AG04449 (cell line): ENCODE measurements at regions of chr9 and their contacts with region 1.

Region 1: GRCh38 chr9:33623658-33624586 is 99.9 kb downstream of the ANKRD18B start:
- DNase-seq: no peak
- H3K4me3 ChIP-seq: no peak overlapping the region
- CTCF ChIP-seq: peak; percentile 79

Region 2: GRCh38 chr9:33638391-33638915 is 14.5 kb after region 1 on chr9:
- CTCF ChIA-PET with region 1: interaction called, 26 read pairs
- POLR2A ChIA-PET with region 1: no interaction called
- DNase-seq: no peak
- H3K4me3 ChIP-seq: no peak overlapping the region
- CTCF ChIP-seq: no peak

Region 3: GRCh38 chr9:33731142-33731541 is 107.2 kb after region 1 on chr9:
- CTCF ChIA-PET with region 1: interaction called, 591 read pairs
- POLR2A ChIA-PET with region 1: no interaction called
- DNase-seq: no peak
- H3K4me3 ChIP-seq: no peak overlapping the region
- CTCF ChIP-seq: no peak

Region 4: GRCh38 chr9:33737811-33738606 is 114.1 kb after region 1 on chr9:
- CTCF ChIA-PET with region 1: interaction called, 35 read pairs
- POLR2A ChIA-PET with region 1: no interaction called
- DNase-seq: peak; percentile 14
- H3K4me3 ChIP-seq: no peak overlapping the region
- CTCF ChIP-seq: peak; percentile 79